ENCODE measurements at regions of chr14 and their contacts with region 1.

Region 1: DNA sequence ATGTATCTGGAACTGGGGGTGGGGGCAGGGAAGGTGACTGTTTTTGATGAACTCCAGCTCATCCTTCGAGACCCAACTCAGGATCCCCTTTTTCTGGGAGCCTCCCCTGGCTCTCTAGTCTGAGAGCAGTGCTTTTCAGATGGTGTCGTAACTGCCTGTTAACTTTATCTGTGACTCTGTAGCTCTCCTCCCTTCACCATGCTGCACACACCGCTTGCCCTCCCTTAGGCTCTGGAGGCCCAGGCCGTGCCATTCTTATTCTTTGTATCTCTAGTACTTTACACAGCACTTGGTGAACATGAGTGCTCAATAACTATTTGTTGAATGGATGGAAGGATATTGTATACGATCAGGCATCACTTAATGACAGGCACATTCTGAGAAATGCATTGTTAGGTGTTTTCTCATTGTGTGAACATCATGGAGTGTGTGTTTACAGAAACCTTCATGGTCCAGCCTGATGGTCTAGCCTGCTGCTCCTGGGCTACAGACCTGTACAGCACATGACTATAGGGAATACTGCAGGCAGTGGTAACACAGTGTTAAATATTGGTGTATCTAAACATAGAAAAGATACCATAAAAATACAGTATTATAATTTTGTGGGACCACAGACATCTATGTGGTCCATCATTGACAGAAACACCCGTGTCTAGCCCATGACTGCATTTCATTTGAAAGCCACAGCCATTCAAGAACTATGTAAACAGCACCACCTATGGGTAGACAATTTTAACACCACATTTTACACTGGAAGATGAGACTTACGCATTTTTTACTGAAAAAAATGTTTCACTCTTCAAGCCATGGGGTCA is 91.8 kb downstream of the EML1 start:
- DNase-seq: no peak
- H3K4me3 Mint-ChIP-seq: no peak overlapping the region
- H3K27ac Mint-ChIP-seq: no peak overlapping the region
- H3K4me1 Mint-ChIP-seq: no peaks in the 10 kb centered on the region
- H3K27me3 Mint-ChIP-seq: peaks cover 11% of the 10 kb centered on the region

Region 2: GRCh38 chr14:99524804-99525698 is 360.0 kb before region 1 on chr14:
- CTCF ChIA-PET with region 1: no interaction called
- POLR2A ChIA-PET with region 1: no interaction called
- intact Hi-C with region 1: loop called (anchors 5 kb)
- DNase-seq: peak; percentile 19
- H3K4me3 Mint-ChIP-seq: no peak overlapping the region
- H3K27ac Mint-ChIP-seq: peak overlapping the region; percentile 62
- H3K4me1 Mint-ChIP-seq: peaks cover 15% of the 10 kb centered on the region
- H3K27me3 Mint-ChIP-seq: no peaks in the 10 kb centered on the region

Region 3: GRCh38 chr14:99729991-99730868 is 154.8 kb before region 1 on chr14:
- CTCF ChIA-PET with region 1: interaction called, 83 read pairs
- POLR2A ChIA-PET with region 1: no interaction called
- intact Hi-C with region 1: loop called (anchors 1 kb)
- DNase-seq: peak; percentile 79
- H3K4me3 Mint-ChIP-seq: no peak overlapping the region
- H3K27ac Mint-ChIP-seq: no peak overlapping the region
- H3K4me1 Mint-ChIP-seq: no peaks in the 10 kb centered on the region
- H3K27me3 Mint-ChIP-seq: peaks cover 36% of the 10 kb centered on the region